Aorta (tissue), 5 donors: ENCODE measurements at regions of chr2 and their contacts with region 1.

Region 1: DNA sequence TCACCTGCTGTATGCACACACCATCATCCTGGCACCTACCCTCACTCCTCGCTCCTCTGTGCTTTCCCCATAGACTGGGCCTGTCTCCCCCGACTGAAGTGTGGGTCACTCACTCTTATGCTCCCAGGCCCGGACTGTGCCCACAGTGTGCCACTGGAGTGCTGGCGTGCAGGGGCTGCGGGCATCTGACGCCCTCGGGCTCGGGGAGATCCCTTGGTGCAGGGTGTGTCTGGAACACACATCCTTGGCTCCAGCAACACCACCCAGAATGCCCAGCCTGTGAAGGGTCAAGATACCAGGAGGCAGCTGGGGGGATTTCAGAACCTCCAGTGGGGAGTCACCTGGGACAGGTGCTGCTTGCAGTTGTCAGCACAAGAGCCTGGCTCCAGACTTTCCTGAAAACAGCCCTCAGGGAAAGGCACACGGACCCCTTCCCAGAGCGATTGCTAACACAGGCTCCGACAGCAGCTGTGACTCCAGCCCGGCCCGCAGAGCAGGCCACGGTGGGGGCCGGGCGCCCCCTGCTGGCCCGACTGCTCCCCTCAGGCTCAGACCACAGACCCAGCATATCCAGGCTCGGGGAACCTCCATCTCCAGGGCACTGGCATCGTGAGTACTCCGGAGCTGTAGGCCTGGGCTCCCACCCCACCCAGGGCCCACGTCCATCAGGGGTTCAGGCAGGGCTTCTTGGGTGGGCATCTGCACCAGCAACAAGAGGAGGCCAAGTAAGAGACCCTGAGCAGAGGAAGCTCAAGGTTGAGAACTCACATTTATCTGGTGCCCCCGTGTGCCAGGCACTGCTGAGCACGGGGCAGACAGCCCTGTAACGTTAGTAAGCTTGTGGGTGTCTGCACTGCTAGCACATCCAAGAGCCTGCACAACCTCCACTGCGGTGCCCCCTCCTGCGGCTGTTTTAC is 8.6 kb downstream of the HS1BP3 start:
- DNase-seq: peak; percentile 88 to 94
- ATAC-seq: peak; percentile 92
- H3K4me3 ChIP-seq: no peak overlapping the region
- H3K27ac ChIP-seq: peak overlapping the region; percentile 72 to 97
- H3K4me1 ChIP-seq: no peaks in the 10 kb centered on the region
- H3K27me3 ChIP-seq: no peaks in the 10 kb centered on the region

Region 2: DNA sequence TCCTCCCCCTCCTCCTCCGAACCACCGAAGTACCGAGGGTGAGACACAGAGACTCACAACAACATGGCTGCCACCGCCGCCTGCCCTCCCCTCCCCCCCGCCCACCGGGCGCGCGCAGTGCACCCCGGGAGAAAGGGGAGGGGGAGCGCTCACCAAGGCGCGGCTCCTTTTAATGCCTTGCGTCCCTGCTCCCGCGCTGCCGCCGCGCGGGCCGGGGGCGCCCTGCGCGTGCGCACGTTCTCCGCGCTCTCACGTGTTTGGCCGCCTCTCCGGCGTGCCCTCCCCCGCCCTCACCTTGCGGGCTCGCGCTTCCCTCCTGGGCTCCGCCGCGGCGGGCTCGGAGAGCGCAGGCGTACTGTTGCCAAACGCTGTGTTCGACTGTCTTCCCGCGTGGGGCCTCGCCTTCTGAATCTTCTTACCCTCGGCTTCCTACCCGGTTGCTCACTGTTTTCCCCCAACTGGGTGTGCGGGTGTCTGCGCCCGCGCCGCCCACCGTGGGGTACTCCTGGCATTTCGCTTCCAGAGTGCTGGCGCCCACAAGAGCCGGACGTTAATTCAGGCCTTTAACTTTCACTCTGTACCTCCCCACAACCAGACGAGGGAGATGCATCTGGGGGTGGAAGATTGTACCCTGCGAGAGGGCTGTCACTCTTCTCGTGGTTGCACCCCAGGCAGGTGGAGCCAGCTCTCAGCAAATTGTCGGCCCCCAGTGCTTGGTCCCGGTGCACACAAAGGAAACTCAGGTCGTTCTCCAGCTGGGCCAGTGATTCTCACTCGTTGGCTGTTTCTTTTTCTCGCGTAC is 291.4 kb before region 1 on chr2 and contains the start of gene PUM2:
- intact Hi-C with region 1: loop called in 1 of 2 experiments (anchors 5 kb)
- DNase-seq: peak; percentile 93 to 96
- ATAC-seq: peak; percentile 98
- H3K4me3 ChIP-seq: peak within 1 kb of the TSS; percentile 83 to 88
- H3K27ac ChIP-seq: peak within 1 kb of the TSS in 1 of 2 donors; percentile 66
- H3K4me1 ChIP-seq: peaks cover 0 to 2% of the 10 kb centered on the region in 2 donors
- H3K27me3 ChIP-seq: no peaks in the 10 kb centered on the region
- total RNA-seq, gene PUM2: 91.5 to 104 TPM

Region 3: GRCh38 chr2:20378792-20379519 is 263.4 kb before region 1 on chr2:
- intact Hi-C with region 1: loop called in 1 of 2 experiments (anchors 5 kb)
- DNase-seq: peak; percentile 92 to 95
- ATAC-seq: peak; percentile 96
- H3K4me3 ChIP-seq: no peak overlapping the region
- H3K27ac ChIP-seq: peak overlapping the region in 1 of 2 donors; percentile 79
- H3K4me1 ChIP-seq: no peaks in the 10 kb centered on the region
- H3K27me3 ChIP-seq: no peaks in the 10 kb centered on the region

Region 4: DNA sequence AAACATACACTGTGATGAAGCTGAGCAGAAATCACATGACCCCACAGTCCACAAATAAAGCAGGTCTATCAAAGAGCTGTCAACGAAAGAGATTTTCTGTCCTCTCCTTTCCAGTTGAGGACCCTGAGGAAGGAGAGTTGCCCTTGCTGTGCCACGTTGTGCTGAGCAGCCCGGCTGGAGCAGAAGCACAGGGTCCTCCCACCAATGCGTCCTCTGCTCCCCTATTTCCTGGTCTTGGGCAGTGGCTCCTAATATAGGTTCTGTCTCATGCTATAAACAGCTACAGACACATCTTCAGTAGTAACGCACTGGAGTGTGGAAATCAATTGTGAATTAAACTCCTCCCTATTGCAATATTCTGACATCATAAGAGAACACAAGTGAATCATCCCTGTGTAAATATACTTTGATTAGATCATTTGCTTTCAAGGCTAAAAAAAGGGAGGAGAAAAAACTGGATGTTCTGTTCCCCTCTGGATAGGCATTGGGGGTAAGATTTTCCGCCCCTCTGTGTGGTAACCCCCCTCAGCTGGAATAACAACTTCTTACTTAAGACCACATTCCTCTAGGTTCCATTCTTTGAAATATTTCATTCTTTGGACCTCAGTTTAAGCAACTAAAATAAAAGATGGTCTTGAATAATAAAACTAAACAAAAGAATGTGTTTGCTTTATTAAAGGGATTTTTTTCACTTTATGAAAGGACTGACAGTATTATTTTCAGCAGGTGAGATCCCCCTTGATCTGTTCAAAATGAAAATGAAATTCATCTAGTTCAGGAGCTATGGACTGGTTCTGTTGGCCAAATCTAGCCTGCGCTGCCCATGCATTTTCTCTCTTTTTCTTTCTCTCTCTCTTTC is 203.8 kb before region 1 on chr2:
- intact Hi-C with region 1: loop called in 1 of 2 experiments (anchors 2 kb)
- DNase-seq: no peak
- ATAC-seq: peak; percentile 77
- H3K4me3 ChIP-seq: no peak overlapping the region
- H3K27ac ChIP-seq: peak overlapping the region; percentile 70 to 91
- H3K4me1 ChIP-seq: peaks cover 0 to 3% of the 10 kb centered on the region in 2 donors
- H3K27me3 ChIP-seq: no peaks in the 10 kb centered on the region

Region 5: DNA sequence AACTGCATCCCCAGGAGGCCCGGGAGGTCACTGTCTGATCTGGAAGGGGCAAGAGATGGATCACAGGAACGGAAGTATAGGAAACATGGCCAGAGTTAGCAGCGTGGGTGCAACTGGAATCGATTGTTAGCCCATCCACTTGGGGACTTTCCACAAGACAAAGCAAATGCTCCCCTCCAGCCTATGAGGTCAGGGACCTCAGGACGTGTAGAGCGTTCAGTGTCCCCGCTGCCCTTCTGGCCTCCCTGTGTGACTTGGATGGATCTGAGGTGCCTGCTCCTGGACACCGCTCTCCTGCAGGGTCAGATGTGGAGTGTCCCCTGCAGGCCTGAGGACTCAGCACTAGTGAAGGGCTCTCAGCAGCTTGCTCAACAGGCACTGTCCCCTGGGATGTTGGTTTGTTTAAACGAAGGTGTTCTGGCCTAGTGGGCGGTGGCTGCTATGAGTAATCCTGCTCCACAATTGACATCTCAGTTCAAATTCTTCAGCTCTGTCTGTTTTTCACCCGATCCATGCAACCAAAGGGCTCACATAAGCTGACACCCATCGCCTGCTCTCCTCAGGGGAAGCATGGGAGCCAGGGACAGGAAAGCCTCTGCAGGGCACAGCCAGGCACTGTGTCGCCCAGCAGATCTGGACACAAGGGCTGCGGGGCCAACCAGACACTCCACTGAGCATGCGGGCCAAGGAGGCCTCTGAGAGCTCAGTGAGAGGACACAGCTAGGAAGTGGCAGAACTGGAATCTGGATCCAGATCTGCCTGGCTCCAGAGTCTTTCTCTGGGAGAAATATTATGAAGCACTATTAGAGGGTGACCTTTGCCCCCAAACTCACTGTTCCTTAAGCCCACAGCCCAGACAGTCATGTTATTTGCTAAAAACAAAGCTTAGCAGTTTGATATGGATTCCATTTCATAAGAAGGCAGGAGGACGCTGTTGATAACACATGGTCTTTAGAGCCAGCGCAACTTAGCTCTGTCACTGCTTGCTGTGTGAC is 117.0 kb before region 1 on chr2:
- intact Hi-C with region 1: no loop called
- DNase-seq: no peak
- ATAC-seq: peak; percentile 55
- H3K4me3 ChIP-seq: no peak overlapping the region
- H3K27ac ChIP-seq: no peak overlapping the region
- H3K4me1 ChIP-seq: no peaks in the 10 kb centered on the region
- H3K27me3 ChIP-seq: no peaks in the 10 kb centered on the region